ENCODE measurements at regions of chr20 and their contacts with region 1.

Region 1: GRCh38 chr20:13771853-13772453 is 12.8 kb downstream of the ESF1 start:
- DNase-seq: no peak
- ATAC-seq: no peak
- H3K4me3 ChIP-seq: no peak overlapping the region
- H3K27ac ChIP-seq: no peak overlapping the region
- H3K4me1 ChIP-seq: no peaks in the 10 kb centered on the region
- H3K27me3 ChIP-seq: no peaks in the 10 kb centered on the region
- CTCF ChIP-seq: peak; percentile 36 to 71 (median 56)
- POLR2A ChIP-seq: no peak

Region 2: DNA sequence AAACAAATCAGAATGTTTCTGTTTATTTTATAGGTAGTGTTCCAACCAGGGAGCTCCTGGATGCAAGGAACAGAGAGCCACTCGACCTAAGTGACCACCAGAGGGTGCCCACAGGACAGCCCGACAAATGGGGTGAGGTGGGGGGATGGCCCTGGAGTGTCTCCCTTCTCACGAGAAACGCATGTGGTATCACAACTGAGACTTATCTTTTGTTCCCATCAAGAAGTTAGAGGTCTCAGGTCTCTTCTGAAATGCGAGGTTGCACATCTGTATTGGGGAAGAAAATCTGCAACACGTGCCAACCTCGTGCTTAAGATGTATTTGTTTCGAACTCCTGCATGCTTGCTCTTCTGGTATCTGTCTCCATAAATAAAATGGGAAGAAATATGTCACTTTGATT is 446.9 kb before region 1 on chr20:
- intact Hi-C with region 1: loop called in 3 of 10 experiments (anchors 5 to 10 kb)
- DNase-seq: no peak
- ATAC-seq: no peak
- H3K4me3 ChIP-seq: no peak overlapping the region
- H3K27ac ChIP-seq: no peak overlapping the region
- H3K4me1 ChIP-seq: peaks cover 0 to 3% (median 0%) of the 10 kb centered on the region in 12 donors
- H3K27me3 ChIP-seq: no peaks in the 10 kb centered on the region
- CTCF ChIP-seq: peak in 11 of 12 donors; percentile 16 to 44 (median 24)
- POLR2A ChIP-seq: no peak

Region 3: DNA sequence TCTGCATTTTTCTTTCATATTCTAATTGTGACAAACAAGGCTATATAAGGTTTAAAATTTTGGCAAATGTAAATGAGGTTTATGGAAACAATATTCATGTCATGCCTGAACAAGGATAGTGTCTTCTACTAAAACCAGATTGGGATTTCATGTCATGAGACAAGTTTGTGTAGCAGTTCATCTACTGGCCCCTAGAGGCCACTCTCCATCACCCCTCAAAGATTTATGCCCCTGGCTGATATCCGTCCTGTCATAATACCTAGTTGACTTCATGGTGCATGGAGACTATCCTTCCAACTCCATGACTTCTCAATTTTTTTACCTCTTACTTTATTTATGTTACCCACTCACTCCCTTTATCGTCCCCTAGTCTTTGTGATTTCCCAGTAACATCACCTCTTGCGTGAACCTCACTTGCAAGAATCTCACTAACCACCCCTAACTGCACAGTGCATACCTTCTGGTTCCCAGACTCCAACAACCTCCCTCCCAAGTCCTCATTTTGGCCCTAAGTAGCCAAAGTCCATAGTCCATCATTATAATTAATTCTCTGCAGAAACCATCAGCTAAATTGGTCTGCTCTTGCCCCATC is 313.0 kb before region 1 on chr20:
- intact Hi-C with region 1: loop called in 3 of 10 experiments (anchors 5 to 10 kb)
- DNase-seq: no peak
- ATAC-seq: peak in 3 of 4 donors; percentile 45 to 72 (median 70)
- H3K4me3 ChIP-seq: no peak overlapping the region
- H3K27ac ChIP-seq: no peak overlapping the region
- H3K4me1 ChIP-seq: peaks cover 0 to 4% (median 0%) of the 10 kb centered on the region in 12 donors
- H3K27me3 ChIP-seq: no peaks in the 10 kb centered on the region
- CTCF ChIP-seq: peak; percentile 57 to 80 (median 68)
- POLR2A ChIP-seq: no peak

Region 4: GRCh38 chr20:13638496-13639222 is 133.3 kb before region 1 on chr20 and contains the start of gene TASP1:
- intact Hi-C with region 1: loop called in 1 of 10 experiments (anchors 10 kb)
- DNase-seq: peak; percentile 95 to 97 (median 96)
- ATAC-seq: peak; percentile 100
- H3K4me3 ChIP-seq: peak within 1 kb of the TSS; percentile 86 to 97 (median 90)
- H3K27ac ChIP-seq: peak within 1 kb of the TSS; percentile 11 to 82 (median 70)
- H3K4me1 ChIP-seq: peaks cover 0 to 12% (median 8%) of the 10 kb centered on the region in 12 donors
- H3K27me3 ChIP-seq: no peaks in the 10 kb centered on the region
- CTCF ChIP-seq: no peak
- POLR2A ChIP-seq: peak in 1 of 2 donors; percentile 70
- total RNA-seq, gene TASP1: 3.5 to 8.6 (median 5.3) TPM